Activated T-helper 1 cell treated with anti-CD3 and anti-CD28 coated beads, Interleukin-12 subunit alpha, Interleukin-12 subunit beta, Interleukin-2, Interleukin-4 antibody, amounts not matched to agents 30 ng/mL and 10 ng/mL and 1 ng/mL, durations not matched to agents 14 hours and 24 hours and 36 hours (primary cell): ENCODE measurements at regions of chr9 and their contacts with region 1.

Region 1: DNA sequence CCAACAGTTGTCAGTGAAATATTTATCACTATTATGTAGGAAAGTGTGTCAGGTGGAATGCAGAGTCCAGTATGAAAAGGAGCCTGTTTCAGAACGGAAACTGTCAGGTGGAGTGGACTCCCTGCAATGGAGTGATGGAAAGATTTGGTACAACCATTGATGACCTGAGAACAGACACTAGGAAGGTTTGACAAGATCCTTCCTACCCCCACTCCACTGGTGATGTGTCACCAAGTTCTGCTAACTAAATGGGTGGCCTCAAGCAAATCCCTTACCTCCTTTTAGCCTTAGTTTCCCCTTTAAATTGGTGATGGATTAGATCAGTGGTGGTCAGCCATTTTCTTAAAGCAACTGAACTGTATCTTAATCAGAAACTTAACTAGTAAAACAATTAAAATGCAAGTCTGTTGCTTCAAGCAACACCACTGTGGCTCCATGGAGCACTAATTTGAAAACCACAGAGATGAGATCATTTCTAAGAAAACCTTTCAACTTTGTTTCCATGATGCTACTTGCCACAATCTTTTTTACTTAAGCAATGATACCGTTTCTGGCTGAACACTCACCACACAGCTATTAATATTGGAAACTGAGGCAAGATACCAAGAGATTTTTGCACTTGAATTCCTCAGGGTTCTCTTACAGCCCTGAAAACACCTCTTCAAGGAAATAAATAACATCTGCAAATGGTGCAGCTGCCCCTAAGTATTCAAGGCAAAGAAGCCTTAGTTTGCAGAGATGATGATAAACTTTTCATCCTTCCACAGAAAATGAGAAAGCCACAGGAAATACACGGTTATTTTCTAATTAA is 140.6 kb downstream of the ERCC6L2 start:
- DNase-seq: peak; percentile 48
- H3K4me3 Mint-ChIP-seq: peak overlapping the region; percentile 44
- H3K27ac Mint-ChIP-seq: peak overlapping the region; percentile 100
- H3K4me1 Mint-ChIP-seq: peaks cover 64% of the 10 kb centered on the region
- H3K27me3 Mint-ChIP-seq: no peaks in the 10 kb centered on the region

Region 2: GRCh38 chr9:95167998-95168397 is 848.1 kb before region 1 on chr9:
- intact Hi-C with region 1: loop called (anchors 1 kb)
- DNase-seq: peak; percentile 47
- H3K4me3 Mint-ChIP-seq: peak overlapping the region; percentile 3
- H3K27ac Mint-ChIP-seq: peak overlapping the region; percentile 61
- H3K4me1 Mint-ChIP-seq: peaks cover 48% of the 10 kb centered on the region
- H3K27me3 Mint-ChIP-seq: no peaks in the 10 kb centered on the region

Region 3: DNA sequence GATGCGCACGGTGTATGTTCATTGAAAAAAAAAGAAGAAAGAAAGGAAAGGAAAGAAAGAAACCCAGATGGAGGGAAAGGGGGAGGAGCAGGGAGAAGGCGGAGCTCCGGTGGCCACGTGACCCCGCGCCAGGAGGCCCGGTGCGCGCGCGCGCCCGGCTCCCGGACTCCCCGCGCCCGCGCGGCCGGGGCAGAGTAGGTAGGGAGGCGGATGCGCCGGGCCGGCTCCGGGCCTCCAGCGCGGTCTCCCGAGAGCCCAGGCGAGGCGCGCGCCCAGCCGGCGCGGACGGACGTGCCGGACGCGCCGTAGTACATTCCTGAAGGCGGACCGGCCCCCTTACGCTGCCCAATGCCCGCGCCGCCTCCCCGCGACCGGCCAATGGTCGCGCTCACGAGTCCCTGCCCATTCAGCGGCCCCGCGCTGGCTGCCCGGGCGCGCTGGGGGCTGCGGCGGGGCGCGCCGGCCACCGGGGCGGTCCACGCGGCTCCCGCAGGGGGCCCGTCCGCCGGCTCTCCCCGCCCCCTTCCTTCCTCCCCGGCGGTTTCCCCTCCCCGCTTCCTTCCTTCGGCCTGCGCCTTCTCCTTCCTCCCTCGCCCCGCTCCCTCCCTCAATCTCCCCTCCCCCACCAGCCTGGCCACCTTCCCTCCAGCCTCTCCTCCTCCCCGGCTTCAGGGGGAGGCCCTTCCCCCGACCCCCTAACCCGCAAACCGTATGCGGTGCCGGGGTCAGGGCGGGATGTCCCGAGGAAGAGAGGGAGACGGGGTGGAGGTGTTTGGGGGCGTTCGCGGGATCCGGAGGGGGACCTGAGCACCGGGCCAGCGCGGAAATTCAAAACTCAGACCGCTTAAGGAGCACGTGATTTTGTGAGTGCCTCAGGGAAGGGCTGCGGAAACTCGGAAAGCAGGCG is 505.1 kb before region 1 on chr9:
- intact Hi-C with region 1: loop called (anchors 2 kb)
- DNase-seq: peak; percentile 82
- H3K4me3 Mint-ChIP-seq: peak overlapping the region; percentile 84
- H3K27ac Mint-ChIP-seq: peak overlapping the region; percentile 88
- H3K4me1 Mint-ChIP-seq: peaks cover 41% of the 10 kb centered on the region
- H3K27me3 Mint-ChIP-seq: peaks cover 61% of the 10 kb centered on the region

Region 4: DNA sequence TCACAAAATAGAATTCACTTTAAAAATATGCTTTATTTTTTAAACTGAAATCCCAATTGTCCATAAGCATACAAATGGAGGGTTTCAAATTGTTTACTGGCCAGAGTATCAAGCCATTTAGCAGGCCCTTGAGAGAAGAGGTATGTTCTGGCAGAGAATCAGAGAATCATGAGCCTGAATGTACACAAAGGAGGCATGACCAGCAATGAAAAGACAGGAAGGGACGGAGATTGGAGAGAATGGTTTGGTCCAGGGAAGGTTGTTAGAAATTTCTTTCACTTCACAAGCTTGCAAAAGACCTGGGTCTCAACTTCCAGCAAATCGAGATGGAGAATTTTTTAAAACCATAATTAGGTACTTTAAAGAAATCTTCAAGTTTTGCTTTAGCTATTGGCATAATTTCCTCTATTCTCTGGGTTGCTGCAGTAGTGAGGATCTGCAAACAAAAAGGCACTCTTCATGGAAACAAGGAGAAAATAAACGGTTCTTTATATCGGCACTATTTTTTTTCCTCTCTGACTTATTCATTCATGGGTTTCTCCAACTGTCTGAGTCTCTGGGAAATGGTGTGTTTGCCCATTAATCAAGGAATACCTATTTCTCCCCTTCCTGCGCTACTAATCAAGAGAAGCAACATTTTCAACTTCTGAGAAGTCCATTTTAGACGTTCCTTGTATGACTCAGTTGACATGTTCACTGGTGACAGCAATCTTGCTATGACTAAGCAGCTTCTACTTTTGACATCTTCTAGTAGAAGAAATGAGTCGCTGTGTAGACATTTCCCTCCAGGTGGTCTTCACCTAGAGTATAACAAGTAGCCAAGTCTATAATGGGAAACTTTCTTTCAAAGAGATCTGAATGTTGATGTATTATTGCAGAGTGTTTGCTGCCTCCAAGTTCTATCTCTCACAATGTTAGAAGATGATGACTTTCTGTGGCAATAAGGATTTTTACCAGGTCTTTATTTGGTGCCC is 163.7 kb before region 1 on chr9:
- intact Hi-C with region 1: loop called (anchors 1 kb)
- DNase-seq: peak; percentile 27
- H3K4me3 Mint-ChIP-seq: peak overlapping the region; percentile 27
- H3K27ac Mint-ChIP-seq: peak overlapping the region; percentile 10
- H3K4me1 Mint-ChIP-seq: peaks cover 39% of the 10 kb centered on the region
- H3K27me3 Mint-ChIP-seq: no peaks in the 10 kb centered on the region

Region 5: DNA sequence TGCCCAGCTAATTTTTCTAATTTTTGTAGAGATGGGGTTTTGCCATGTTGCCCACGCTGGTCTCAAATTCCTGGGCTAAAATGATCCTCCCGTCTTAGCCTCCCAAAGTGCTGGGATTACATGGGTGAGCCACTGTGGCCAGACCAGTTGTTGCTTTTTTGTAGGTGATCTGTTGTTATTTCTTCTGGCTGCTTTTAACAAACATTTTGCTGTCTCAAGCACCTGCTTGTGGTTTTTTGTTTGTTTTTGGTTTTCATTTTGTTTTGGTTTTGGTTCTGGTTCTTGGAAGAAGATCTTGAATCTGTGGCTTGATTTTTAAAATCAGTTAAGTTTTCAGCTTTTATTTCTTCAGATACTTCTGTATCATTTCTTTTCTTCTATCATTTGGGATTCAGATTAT is 119.5 kb before region 1 on chr9:
- intact Hi-C with region 1: loop called (anchors 5 kb)
- DNase-seq: no peak
- H3K4me3 Mint-ChIP-seq: peak overlapping the region; percentile 60
- H3K27ac Mint-ChIP-seq: peak overlapping the region; percentile 80
- H3K4me1 Mint-ChIP-seq: peaks cover 39% of the 10 kb centered on the region
- H3K27me3 Mint-ChIP-seq: no peaks in the 10 kb centered on the region

Region 6: DNA sequence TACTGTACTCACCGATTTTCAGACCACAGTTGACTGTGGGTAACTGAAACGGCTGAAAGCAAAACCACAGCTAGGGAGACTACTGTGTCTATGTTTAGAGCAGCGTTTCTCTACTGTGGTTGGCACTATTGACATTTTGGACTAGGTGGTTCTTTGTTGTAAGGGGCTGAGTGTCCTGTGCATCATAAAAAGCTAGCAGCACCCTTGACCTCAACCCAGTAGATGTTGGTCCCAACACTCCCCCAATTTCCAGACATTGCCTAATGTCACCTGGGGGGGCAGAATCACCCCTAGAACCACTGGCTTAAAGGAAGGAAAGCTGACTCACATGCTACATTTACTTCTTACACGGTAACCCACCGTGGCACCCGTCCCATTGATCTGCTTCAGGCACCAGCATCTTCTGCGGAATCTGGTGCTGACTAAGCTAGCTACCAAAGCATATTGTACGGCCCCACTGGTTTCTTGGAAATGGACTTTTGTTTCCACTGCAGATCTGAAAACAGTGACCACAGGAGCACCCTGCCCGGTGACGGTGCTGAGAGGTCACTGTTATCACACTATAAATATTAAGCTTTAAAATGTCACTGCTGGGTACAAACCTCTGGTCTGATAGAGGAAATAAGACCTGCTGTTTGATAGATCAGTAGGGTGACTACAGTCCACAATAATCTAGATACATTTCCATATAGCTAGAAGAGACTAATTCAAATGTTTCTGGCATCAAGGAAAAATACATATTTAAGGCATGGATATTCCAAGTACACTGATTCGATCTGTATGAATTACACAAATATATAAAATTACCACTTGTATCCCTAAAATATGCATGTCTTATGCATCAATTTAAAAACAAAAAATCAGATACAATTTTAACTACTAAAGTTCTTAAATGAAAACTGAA is 134.5 kb after region 1 on chr9:
- intact Hi-C with region 1: loop called (anchors 2 kb)
- DNase-seq: peak; percentile 42
- H3K4me3 Mint-ChIP-seq: peak overlapping the region; percentile 47
- H3K27ac Mint-ChIP-seq: peak overlapping the region; percentile 65
- H3K4me1 Mint-ChIP-seq: peaks cover 38% of the 10 kb centered on the region
- H3K27me3 Mint-ChIP-seq: peaks cover 15% of the 10 kb centered on the region